Transverse colon (tissue), 4 donors: ENCODE measurements at regions of chr21 and their contacts with region 1.

Region 1: DNA sequence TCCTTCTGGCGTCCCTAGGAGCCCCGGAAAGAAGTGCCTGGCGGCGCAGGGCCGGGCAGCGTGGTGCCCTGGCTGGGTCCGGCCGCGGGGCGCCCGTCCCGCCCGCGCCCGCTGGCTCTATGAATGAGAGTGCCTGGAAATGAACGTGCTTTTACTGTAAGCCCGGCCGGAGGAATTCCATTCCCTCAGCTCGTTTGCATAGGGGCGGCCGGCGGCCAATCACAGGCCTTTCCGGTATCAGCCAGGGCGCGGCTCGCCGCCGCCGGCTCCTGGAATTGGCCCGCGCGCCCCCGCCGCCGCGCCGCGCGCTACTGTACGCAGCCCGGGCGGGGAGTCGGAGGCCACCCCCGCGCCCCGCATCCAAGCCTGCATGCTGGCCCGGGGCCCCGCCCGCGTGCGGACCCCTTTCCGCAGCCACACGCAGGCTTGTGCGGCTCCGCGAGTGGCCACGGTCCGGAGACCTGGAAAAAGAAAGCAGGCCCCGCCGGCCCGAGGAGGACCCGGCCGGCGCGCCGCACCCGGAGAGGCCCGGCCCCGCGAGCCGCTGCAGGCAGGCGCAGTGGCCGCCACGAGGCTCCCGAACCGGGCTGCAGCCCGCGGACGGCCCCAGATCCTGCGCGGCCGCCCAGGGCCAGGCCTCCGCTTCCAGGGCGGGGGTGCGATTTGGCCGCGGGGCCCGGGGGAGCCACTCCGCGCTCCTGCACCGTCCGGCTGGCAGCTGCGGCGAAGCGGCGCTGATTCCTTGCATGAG is 160.4 kb downstream of the RUNX1 start:
- DNase-seq: peak; percentile 96
- H3K4me3 ChIP-seq: peak overlapping the region; percentile 71 to 86 (median 74)
- H3K27ac ChIP-seq: peak overlapping the region; percentile 95 to 99 (median 97)
- H3K4me1 ChIP-seq: peaks cover 0 to 45% (median 22%) of the 10 kb centered on the region in 4 donors
- H3K27me3 ChIP-seq: peaks cover 51% of the 10 kb centered on the region
- CTCF ChIP-seq: peak in 1 of 5 experiments; percentile 31
- EP300 ChIP-seq: no peak
- POLR2A ChIP-seq: peak; percentile 97

Region 2: DNA sequence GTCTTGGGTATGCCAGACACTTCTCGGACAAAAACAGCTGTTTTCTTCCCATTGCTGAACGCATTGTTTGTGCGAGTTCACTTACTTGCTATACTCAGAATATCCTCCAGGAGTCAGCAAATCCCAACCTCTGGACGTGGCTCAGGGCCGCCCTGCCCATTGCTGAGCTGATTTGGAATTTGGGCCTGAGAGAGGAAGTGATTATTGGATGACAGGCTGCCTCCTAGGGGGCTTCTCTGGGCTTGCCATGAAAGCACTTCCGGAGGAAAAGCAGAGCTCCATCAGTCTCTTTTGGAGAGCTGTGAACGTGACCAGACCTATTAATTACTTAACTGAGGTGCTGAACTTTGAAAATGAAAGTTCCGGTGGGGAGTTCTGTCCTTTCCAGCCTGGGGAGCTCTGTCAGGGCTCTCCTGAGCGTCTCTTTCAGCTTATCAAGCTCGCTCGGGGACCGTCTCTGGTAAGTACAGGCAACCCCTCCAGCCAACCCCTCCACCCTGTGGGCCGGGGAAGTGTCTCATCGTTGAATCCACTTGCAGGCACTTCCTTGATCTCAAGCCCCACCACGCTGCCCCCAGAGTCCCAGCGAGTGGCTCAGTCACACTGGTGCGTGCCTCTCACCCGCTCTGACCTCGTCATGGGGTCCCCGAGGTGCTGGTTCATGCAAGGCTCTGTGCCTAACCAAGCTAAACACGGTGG is 143.0 kb before region 1 on chr21:
- in situ Hi-C with region 1: loop called in 1 of 4 experiments (anchors 10 kb)
- intact Hi-C with region 1: loop called (anchors 10 kb)
- DNase-seq: peak; percentile 65
- H3K4me3 ChIP-seq: no peak overlapping the region
- H3K27ac ChIP-seq: no peak overlapping the region
- H3K4me1 ChIP-seq: peaks cover 0 to 8% (median 2%) of the 10 kb centered on the region in 4 donors
- H3K27me3 ChIP-seq: no peaks in the 10 kb centered on the region
- CTCF ChIP-seq: peak; percentile 83 to 93 (median 86)
- EP300 ChIP-seq: no peak
- POLR2A ChIP-seq: no peak

Region 3: GRCh38 chr21:35051287-35051818 is 162.6 kb after region 1 on chr21:
- in situ Hi-C with region 1: no loop called
- intact Hi-C with region 1: loop called (anchors 5 kb)
- DNase-seq: peak; percentile 89
- H3K4me3 ChIP-seq: no peak overlapping the region
- H3K27ac ChIP-seq: peak overlapping the region; percentile 72 to 77 (median 73)
- H3K4me1 ChIP-seq: peaks cover 15 to 42% (median 28%) of the 10 kb centered on the region in 4 donors
- H3K27me3 ChIP-seq: no peaks in the 10 kb centered on the region
- CTCF ChIP-seq: peak; percentile 47 to 80 (median 64)
- EP300 ChIP-seq: no peak
- POLR2A ChIP-seq: peak; percentile 15

Region 4: GRCh38 chr21:35400233-35400957 is 511.7 kb after region 1 on chr21:
- in situ Hi-C with region 1: loop called in 3 of 4 experiments (anchors 5 to 10 kb)
- intact Hi-C with region 1: loop called (anchors 5 kb)
- DNase-seq: peak; percentile 32
- H3K4me3 ChIP-seq: no peak overlapping the region
- H3K27ac ChIP-seq: no peak overlapping the region
- H3K4me1 ChIP-seq: peaks cover 0 to 7% (median 0%) of the 10 kb centered on the region in 4 donors
- H3K27me3 ChIP-seq: no peaks in the 10 kb centered on the region
- CTCF ChIP-seq: peak; percentile 51 to 78 (median 55)
- EP300 ChIP-seq: no peak
- POLR2A ChIP-seq: no peak

Region 5: DNA sequence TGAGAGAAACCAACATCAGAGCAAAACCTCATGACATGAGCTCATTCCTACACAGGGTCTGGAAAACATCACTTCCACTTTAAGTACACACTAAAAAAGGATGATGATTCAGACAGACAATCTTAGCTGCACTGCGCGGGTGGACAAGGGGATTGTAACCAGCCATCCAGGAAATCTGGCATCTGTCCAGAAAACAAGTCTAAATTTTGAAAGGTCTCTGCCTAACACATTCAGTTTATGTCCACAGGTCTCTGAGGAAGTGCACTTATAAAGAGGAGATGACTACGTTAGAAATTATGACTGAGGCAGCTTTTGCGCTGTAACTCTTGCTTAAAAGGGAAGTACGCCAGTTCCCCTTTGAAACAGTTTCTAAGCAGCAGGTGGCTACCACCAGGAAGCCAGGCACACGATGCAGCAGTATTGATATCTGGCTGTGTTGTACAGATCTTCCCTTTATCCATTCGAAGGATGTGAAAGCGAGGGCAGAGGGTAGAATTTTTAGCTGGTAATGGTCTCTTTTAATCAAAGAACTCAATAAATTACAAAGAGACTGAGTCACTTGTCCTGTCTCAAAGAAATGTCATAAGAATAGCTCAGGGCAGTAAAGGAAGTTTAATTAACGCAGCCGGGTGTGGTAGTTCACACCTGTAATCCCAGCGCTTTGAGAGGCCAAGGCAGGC is 1043.6 kb after region 1 on chr21:
- in situ Hi-C with region 1: loop called in 2 of 4 experiments (anchors 25 kb)
- intact Hi-C with region 1: no loop called
- DNase-seq: peak; percentile 37
- H3K4me3 ChIP-seq: no peak overlapping the region
- H3K27ac ChIP-seq: peak overlapping the region; percentile 20 to 71 (median 60)
- H3K4me1 ChIP-seq: peaks cover 0 to 21% (median 7%) of the 10 kb centered on the region in 4 donors
- H3K27me3 ChIP-seq: no peaks in the 10 kb centered on the region
- CTCF ChIP-seq: no peak
- EP300 ChIP-seq: no peak
- POLR2A ChIP-seq: no peak